Activated CD4-positive, alpha-beta T cell treated with anti-CD3 and anti-CD28 coated beads, Interleukin-2, amount 10 ng/mL, durations not matched to agents 24 days and 14 days (primary cell): ENCODE measurements at regions of chr12 and their contacts with region 1.

Region 1: DNA sequence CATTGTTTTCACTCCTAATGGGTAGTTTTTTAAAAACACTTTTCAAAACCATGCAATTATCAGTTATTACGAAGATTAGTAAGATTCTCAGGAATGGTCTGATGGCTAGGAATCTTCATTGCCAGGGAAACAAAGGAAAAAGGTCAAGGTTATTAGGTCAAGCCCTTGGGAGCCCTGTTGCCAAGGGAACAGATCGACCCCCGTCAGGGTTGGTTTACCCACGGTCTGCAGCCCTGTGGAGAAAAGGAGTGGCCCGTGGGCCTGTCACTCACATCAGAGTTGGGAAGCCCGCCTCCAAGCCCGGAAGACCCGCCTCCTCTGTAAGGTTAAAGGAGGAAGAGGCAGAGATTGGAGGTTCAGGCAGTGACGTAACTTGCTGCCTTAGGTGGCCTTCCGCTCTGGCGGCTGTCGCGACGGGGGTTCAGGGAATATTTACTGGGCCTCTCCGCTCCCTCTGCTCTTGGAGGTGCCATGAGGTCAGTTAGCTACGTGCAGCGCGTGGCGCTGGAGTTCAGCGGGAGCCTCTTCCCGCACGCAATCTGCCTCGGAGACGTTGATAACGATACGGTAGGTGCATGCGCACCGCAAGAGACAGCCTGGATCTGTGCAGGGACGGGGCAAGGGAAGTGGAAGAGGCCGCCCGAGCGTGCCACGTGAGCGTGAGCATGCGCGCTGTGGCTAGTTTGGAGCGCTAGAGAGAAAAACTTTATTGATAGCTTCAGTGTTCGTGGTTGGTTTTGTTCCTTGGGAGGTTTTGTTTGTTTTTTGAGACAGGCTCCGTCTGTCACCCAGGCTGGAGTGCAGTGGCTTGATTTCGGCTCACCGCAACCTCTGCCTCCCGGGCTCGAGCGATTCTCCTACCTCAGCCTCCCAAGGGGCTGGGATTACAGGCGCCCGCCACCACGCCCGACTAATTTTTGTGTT is at the start of gene ITFG2:
- DNase-seq: peak; percentile 99
- H3K4me3 Mint-ChIP-seq: peak within 1 kb of the TSS; percentile 100
- H3K27ac Mint-ChIP-seq: peak within 1 kb of the TSS; percentile 100
- H3K4me1 Mint-ChIP-seq: peaks cover 21% of the 10 kb centered on the region
- H3K27me3 Mint-ChIP-seq: no peaks in the 10 kb centered on the region
- total RNA-seq, gene ITFG2: 36.5 and 43.8 TPM in 2 replicates

Region 2: DNA sequence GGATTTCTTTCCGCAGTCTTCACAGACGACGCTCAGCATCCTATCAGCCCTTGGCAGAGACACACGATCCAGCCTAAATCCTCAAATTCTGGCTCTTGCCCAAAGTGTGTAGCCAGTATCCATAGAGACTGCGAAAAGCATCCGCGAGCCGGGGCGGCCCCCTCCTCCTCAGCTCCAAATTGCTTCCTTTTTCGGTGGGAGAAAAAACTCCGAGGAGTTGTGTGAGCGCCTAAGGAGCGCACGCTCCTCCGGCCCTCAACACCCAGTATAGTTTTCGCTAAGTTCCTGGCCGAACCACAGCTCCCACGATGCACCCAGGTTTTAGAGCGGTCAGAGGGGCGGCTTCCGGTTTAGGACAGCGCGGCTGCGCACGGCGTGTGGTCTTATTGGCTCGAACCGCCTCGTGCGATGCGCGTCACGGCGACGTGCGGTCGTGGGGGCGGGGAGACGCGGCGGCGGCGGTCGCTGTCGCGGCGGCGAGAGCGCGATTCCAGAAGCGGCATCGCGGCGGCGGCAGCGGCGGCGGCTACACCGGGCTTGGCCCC is 1121.9 kb before region 1 on chr12 and contains the start of gene ADIPOR2:
- intact Hi-C with region 1: loop called (anchors 2 kb)
- DNase-seq: peak; percentile 98
- H3K4me3 Mint-ChIP-seq: peak within 1 kb of the TSS; percentile 88
- H3K27ac Mint-ChIP-seq: peak within 1 kb of the TSS; percentile 99
- H3K4me1 Mint-ChIP-seq: peaks cover 28% of the 10 kb centered on the region
- H3K27me3 Mint-ChIP-seq: peaks cover 8% of the 10 kb centered on the region
- total RNA-seq, gene ADIPOR2: 68.7 and 71.2 TPM in 2 replicates

Region 3: DNA sequence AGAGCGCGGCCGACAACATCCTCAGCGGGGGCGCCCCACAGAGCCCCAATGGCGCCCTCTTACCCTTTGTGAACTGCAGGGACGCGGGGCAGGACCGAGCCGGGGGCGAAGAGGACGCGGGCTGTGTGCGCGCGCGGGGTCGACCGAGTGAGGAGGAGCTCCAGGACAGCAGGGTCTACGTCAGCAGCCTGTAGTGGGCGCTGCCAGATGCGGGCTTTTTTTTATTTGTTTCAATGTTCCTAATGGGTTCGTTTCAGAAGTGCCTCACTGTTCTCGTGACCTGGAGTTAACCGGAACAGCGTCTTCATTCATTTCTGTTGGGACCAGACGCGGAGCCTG is 121.6 kb before region 1 on chr12:
- intact Hi-C with region 1: loop called (anchors 1 kb)
- DNase-seq: peak; percentile 89
- H3K4me3 Mint-ChIP-seq: peak overlapping the region; percentile 82
- H3K27ac Mint-ChIP-seq: peak overlapping the region; percentile 91
- H3K4me1 Mint-ChIP-seq: peaks cover 30% of the 10 kb centered on the region
- H3K27me3 Mint-ChIP-seq: peaks cover 3% of the 10 kb centered on the region

Region 4: GRCh38 chr12:2862876-2863275 is 50.3 kb after region 1 on chr12:
- intact Hi-C with region 1: loop called (anchors 2 kb)
- DNase-seq: no peak
- H3K4me3 Mint-ChIP-seq: no peak overlapping the region
- H3K27ac Mint-ChIP-seq: no peak overlapping the region
- H3K4me1 Mint-ChIP-seq: peaks cover 4% of the 10 kb centered on the region
- H3K27me3 Mint-ChIP-seq: no peaks in the 10 kb centered on the region

Region 5: DNA sequence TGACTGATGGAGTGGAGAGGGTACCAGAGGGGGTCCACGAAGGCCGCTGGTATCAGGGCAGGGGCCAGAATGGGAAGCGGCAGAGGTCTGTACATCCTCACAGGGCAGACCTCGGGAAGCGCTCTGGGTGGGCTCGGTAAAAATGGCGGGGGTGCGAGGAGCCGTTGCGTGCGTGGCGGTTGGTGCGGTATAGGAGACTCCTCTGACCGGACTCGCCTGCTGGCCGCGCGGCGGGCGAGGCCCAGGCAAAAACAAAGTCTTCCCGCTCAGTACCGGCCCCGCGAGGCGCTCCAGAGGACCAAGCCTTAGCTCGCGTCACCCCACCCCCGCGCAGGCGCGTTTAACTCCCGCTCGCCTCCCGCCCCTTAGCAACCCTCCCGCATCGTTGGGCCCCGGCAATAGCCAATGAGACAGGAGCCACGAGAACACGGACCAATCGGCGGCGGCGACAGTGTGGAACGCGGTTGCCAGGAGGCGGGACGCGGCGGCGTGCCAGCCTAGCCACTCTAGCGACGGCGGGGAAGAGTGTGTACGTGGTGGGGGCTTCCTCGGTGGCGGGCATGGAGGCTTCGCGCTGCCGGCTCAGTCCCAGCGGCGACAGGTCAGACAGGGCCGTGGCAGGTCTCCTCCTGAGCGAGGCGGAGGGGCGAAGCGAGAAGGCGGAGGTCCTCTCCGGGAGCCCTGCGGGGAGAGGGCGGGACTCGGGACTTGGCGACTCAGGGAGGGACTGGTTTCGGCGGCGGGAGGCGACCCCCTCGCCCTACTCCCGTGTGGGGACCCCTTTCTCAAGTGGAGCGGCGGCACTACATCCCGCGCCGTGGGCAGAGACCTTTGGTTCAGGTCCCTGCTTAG is 78.1 kb after region 1 on chr12 and contains the start of gene TULP3:
- intact Hi-C with region 1: loop called (anchors 1 kb)
- DNase-seq: peak; percentile 99
- H3K4me3 Mint-ChIP-seq: peak within 1 kb of the TSS; percentile 99
- H3K27ac Mint-ChIP-seq: peak within 1 kb of the TSS; percentile 94
- H3K4me1 Mint-ChIP-seq: peaks cover 32% of the 10 kb centered on the region
- H3K27me3 Mint-ChIP-seq: peaks cover 3% of the 10 kb centered on the region
- total RNA-seq, gene TULP3: 7.6 and 7.8 TPM in 2 replicates